Caco-2 (cell line): ENCODE measurements at regions of chr1 and their contacts with region 1.

Region 1: DNA sequence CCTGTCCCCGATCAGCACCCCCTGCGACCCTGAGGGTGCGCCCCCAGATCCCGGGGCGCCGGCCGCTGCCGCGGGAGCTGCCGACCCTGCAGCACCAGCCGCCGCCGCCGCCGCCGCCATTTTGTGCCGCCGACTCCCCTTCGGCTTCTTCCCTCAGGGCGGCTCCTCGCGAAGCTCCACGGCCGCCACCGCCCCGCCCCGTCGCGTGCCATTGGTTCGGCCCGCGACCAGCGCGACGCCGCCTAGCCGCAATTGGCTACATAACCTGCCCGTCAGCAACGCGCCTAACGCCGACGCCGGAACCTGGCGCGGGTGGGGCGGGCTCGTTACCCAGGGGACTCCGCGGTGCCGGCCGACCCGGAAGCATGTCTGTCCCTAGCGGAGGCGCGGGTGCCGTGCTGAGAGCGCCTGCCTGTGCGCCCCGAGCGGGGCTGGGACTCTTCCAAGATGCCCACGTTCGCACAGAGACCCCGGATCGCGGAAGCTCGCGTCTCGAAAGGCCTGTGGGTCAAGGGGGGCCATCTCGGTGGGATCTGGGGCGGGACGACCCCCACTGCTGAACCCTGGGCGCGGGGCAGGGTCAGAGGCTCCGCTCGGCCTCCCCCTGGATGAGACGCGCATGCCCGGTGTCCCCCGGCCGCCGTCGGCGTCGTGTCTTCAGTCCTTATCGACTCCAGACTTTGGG is at the start of gene CCNL2:
- DNase-seq: peak; percentile 97 to 98
- H3K4me3 ChIP-seq: peak within 1 kb of the TSS; percentile 94
- H3K4me3 Mint-ChIP-seq: peak within 1 kb of the TSS; percentile 86
- H3K27ac Mint-ChIP-seq: peak within 1 kb of the TSS; percentile 93
- H3K4me1 ChIP-seq: peaks cover 22% of the 10 kb centered on the region
- H3K4me1 Mint-ChIP-seq: peaks cover 12% of the 10 kb centered on the region
- H3K27me3 ChIP-seq: no peaks in the 10 kb centered on the region
- H3K27me3 Mint-ChIP-seq: no peaks in the 10 kb centered on the region
- CTCF ChIP-seq: peak; percentile 44 to 54
- total RNA-seq, gene CCNL2: 145 and 147 TPM in 2 replicates

Region 2: GRCh38 chr1:1374929-1375662 is 24.2 kb before region 1 on chr1 and contains the start of gene AURKAIP1:
- CTCF ChIA-PET with region 1: no interaction called
- POLR2A ChIA-PET with region 1: interaction called, 16 read pairs
- intact Hi-C with region 1: no loop called
- DNase-seq: peak; percentile 97 to 98
- H3K4me3 ChIP-seq: peak within 1 kb of the TSS; percentile 84
- H3K4me3 Mint-ChIP-seq: peak within 1 kb of the TSS; percentile 85
- H3K27ac Mint-ChIP-seq: peak within 1 kb of the TSS; percentile 93
- H3K4me1 ChIP-seq: peaks cover 6% of the 10 kb centered on the region
- H3K4me1 Mint-ChIP-seq: no peaks in the 10 kb centered on the region
- H3K27me3 ChIP-seq: no peaks in the 10 kb centered on the region
- H3K27me3 Mint-ChIP-seq: no peaks in the 10 kb centered on the region
- CTCF ChIP-seq: peak in 1 of 2 experiments; percentile 39
- total RNA-seq, gene AURKAIP1: 187 and 200 TPM in 2 replicates

Region 3: DNA sequence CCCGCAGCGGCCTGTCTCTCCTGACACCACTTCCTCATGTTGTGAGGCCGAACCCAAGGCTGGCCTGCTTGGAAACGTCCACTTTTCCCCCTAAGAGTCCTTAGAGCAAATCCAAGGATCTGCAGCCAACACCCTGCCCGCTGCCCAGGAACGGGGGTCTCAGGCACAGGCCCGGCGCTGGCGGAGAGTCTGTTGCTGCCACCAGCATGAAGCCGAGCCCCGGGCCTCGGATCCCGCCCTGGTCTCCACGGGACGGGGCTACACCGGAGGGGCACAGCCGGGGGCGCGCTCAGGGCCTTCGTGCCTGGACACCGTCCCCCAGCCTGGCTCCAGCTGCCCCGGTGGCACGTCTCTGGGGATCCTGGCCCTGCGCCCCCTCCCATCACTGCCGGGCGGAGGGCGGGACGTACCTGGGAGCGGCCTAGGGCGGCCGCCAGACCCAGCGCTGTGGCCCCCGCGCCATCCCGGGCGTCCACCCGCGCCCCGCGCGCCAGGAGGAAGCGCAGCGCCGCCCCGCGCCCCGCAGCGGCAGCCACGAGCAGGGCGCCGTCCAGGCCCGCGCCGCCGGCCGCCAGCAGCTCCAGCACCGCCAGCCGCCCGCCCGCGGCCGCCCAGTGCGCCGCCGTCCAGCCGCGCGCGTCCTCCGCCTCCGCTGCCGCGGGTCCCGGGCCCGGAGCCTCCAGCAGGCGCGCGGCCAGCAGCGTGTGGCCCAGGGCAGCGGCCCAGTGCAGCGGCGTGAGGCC is 20.5 kb after region 1 on chr1:
- CTCF ChIA-PET with region 1: no interaction called
- POLR2A ChIA-PET with region 1: no interaction called
- intact Hi-C with region 1: no loop called
- DNase-seq: no peak
- H3K4me3 ChIP-seq: no peak overlapping the region
- H3K4me3 Mint-ChIP-seq: no peak overlapping the region
- H3K27ac Mint-ChIP-seq: no peak overlapping the region
- H3K4me1 ChIP-seq: peaks cover 25% of the 10 kb centered on the region
- H3K4me1 Mint-ChIP-seq: no peaks in the 10 kb centered on the region
- H3K27me3 ChIP-seq: no peaks in the 10 kb centered on the region
- H3K27me3 Mint-ChIP-seq: no peaks in the 10 kb centered on the region
- CTCF ChIP-seq: no peak

Region 4: GRCh38 chr1:1430114-1430982 is 31.0 kb after region 1 on chr1:
- CTCF ChIA-PET with region 1: interaction called, 3 read pairs
- POLR2A ChIA-PET with region 1: interaction called, 7 read pairs
- intact Hi-C with region 1: loop called (anchors 5 kb)
- DNase-seq: peak in 1 of 2 experiments; percentile 73
- H3K4me3 ChIP-seq: no peak overlapping the region
- H3K4me3 Mint-ChIP-seq: no peak overlapping the region
- H3K27ac Mint-ChIP-seq: peak overlapping the region; percentile 59
- H3K4me1 ChIP-seq: peaks cover 63% of the 10 kb centered on the region
- H3K4me1 Mint-ChIP-seq: peaks cover 5% of the 10 kb centered on the region
- H3K27me3 ChIP-seq: no peaks in the 10 kb centered on the region
- H3K27me3 Mint-ChIP-seq: no peaks in the 10 kb centered on the region
- CTCF ChIP-seq: no peak

Region 5: GRCh38 chr1:1441002-1441888 is 41.9 kb after region 1 on chr1:
- CTCF ChIA-PET with region 1: no interaction called
- POLR2A ChIA-PET with region 1: interaction called, 4 read pairs
- intact Hi-C with region 1: loop called (anchors 2 kb)
- DNase-seq: peak in 1 of 2 experiments; percentile 66
- H3K4me3 ChIP-seq: no peak overlapping the region
- H3K4me3 Mint-ChIP-seq: no peak overlapping the region
- H3K27ac Mint-ChIP-seq: no peak overlapping the region
- H3K4me1 ChIP-seq: peaks cover 17% of the 10 kb centered on the region
- H3K4me1 Mint-ChIP-seq: no peaks in the 10 kb centered on the region
- H3K27me3 ChIP-seq: no peaks in the 10 kb centered on the region
- H3K27me3 Mint-ChIP-seq: no peaks in the 10 kb centered on the region
- CTCF ChIP-seq: peak; percentile 64 to 77